GM12878 (cell line): ENCODE measurements at regions of chr19 and their contacts with region 1.

Region 1: GRCh38 chr19:53195265-53195903 is 2.2 kb upstream of the ZNF665 start:
- DNase-seq: peak; percentile 27
- ATAC-seq: peak; percentile 51; the same call in 2 of the 3 replicates
- H3K4me3 ChIP-seq: no peak overlapping the region
- H3K27ac ChIP-seq: no peak overlapping the region
- H3K4me1 ChIP-seq: no peaks in the 10 kb centered on the region
- H3K27me3 ChIP-seq: no peaks in the 10 kb centered on the region
- CTCF ChIP-seq: peak; percentile 77 to 92 (median 82)
- EP300 ChIP-seq: no peak
- POLR2A ChIP-seq: no peak
- RAD21 ChIP-seq: peak; percentile 91

Region 2: GRCh38 chr19:53158119-53158656 is 37.2 kb before region 1 on chr19:
- CTCF ChIA-PET with region 1: no interaction called
- POLR2A ChIA-PET with region 1: no interaction called
- RAD21 ChIA-PET with region 1: no interaction called
- SMC1A ChIA-PET with region 1: no interaction called
- in situ Hi-C with region 1: no loop called
- intact Hi-C with region 1: no loop called
- DNase-seq: no peak
- ATAC-seq: no peak
- H3K4me3 ChIP-seq: peak overlapping the region; percentile 59
- H3K27ac ChIP-seq: peak overlapping the region; percentile 39; the same call in 1 of the 2 replicates
- H3K4me1 ChIP-seq: no peaks in the 10 kb centered on the region
- H3K27me3 ChIP-seq: no peaks in the 10 kb centered on the region
- CTCF ChIP-seq: no peak
- EP300 ChIP-seq: no peak
- POLR2A ChIP-seq: no peak
- RAD21 ChIP-seq: no peak

Region 3: GRCh38 chr19:53212703-53213320 is 17.4 kb after region 1 on chr19:
- CTCF ChIA-PET with region 1: no interaction called
- POLR2A ChIA-PET with region 1: no interaction called
- RAD21 ChIA-PET with region 1: no interaction called
- SMC1A ChIA-PET with region 1: no interaction called
- in situ Hi-C with region 1: no loop called
- intact Hi-C with region 1: no loop called
- DNase-seq: no peak
- ATAC-seq: no peak
- H3K4me3 ChIP-seq: no peak overlapping the region
- H3K27ac ChIP-seq: no peak overlapping the region
- H3K4me1 ChIP-seq: no peaks in the 10 kb centered on the region
- H3K27me3 ChIP-seq: no peaks in the 10 kb centered on the region
- CTCF ChIP-seq: no peak
- EP300 ChIP-seq: no peak
- POLR2A ChIP-seq: no peak
- RAD21 ChIP-seq: no peak

Region 4: DNA sequence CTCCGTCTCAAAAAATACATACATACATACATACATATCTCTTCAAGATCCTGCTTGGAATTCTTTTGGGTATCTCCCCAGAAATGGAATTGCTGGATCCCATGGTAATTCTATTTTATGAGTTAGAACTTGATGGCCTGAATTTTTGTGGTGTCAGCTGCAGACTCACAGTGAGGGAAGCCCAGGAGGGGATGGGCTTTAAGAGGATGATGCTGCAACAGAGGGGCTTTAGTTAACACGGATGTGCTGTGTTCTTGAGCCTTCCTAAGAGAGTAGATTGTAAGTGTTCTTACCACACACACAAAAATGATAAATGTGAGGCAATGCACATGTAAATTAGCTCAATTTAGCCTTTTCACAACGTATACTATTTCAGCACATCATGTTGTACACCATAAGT is 827.8 kb after region 1 on chr19:
- CTCF ChIA-PET with region 1: interaction called, 10 read pairs
- POLR2A ChIA-PET with region 1: no interaction called
- RAD21 ChIA-PET with region 1: no interaction called
- SMC1A ChIA-PET with region 1: no interaction called
- in situ Hi-C with region 1: loop called (anchors 10 kb)
- intact Hi-C with region 1: no loop called
- DNase-seq: no peak
- ATAC-seq: no peak
- H3K4me3 ChIP-seq: no peak overlapping the region
- H3K27ac ChIP-seq: no peak overlapping the region
- H3K4me1 ChIP-seq: no peaks in the 10 kb centered on the region
- H3K27me3 ChIP-seq: no peaks in the 10 kb centered on the region
- CTCF ChIP-seq: no peak
- EP300 ChIP-seq: no peak
- POLR2A ChIP-seq: no peak
- RAD21 ChIP-seq: no peak

Region 5: GRCh38 chr19:54029930-54030490 is 834.6 kb after region 1 on chr19:
- CTCF ChIA-PET with region 1: interaction called, 10 read pairs
- POLR2A ChIA-PET with region 1: no interaction called
- RAD21 ChIA-PET with region 1: no interaction called
- SMC1A ChIA-PET with region 1: no interaction called
- in situ Hi-C with region 1: loop called (anchors 10 kb)
- intact Hi-C with region 1: no loop called
- DNase-seq: no peak
- ATAC-seq: no peak
- H3K4me3 ChIP-seq: no peak overlapping the region
- H3K27ac ChIP-seq: no peak overlapping the region
- H3K4me1 ChIP-seq: no peaks in the 10 kb centered on the region
- H3K27me3 ChIP-seq: no peaks in the 10 kb centered on the region
- CTCF ChIP-seq: peak in 2 of 3 experiments; percentile 42 to 44; a peak in 3 of 6 replicates
- EP300 ChIP-seq: no peak
- POLR2A ChIP-seq: no peak
- RAD21 ChIP-seq: peak; percentile 30; the same call in 1 of the 2 replicates